Heart left ventricle (tissue), 16 donors: ENCODE measurements at regions of chr9 and their contacts with region 1.

Region 1: DNA sequence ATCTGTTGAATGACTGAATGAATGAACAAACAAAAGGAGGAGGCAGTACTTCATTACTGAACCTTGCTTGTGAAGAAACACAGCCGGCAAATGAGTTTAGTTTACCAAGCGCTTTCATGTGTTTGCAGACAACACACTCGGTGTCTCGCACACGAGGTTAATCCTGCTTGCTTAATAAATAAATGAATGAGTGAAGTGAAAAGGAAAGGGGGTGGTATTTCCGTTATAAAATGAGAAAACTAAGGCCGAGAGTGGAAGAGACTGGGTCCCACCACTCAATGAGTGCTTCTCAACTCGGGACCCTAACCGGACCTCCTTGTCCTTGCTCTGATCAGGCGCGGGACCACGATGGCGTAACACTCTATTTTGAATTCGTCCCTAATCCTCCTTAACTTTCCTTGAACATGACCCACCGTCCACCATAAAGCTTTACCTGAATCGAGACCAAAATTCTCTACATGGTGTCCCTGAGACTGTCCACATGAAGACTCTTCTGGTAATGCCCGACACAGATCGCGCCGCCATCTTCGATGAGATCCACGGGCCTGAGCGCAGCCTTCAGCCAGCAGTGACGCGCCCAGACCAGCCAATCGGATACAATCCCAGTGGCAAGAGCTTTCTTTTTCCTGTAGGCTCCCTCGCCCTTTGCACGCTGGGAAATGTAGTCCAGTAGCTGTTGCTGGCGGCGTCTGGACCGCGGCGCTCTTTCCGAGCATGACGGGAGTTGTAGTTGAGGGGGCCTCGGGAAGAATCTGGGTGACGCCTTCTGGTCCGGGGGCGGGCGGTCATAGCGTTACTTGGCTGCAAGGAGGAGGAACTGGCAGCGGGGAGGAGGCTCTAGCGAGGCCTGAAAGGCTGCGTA is at the starts of genes MRPL50 and ZNF189:
- DNase-seq: peak; percentile 97 to 99 (median 99)
- ATAC-seq: peak; percentile 96 to 99 (median 98)
- H3K4me3 ChIP-seq: peak within 1 kb of the TSS; percentile 37 to 86 (median 77)
- H3K27ac ChIP-seq: peak within 1 kb of the TSS; percentile 82 to 95 (median 91)
- H3K4me1 ChIP-seq: peaks cover 10 to 57% (median 34%) of the 10 kb centered on the region in 12 donors
- H3K27me3 ChIP-seq: no peaks in the 10 kb centered on the region
- CTCF ChIP-seq: no peak
- POLR2A ChIP-seq: peak in 1 of 2 donors; percentile 82
- total RNA-seq, gene MRPL50: 12.3 to 18.3 (median 15.6) TPM
- total RNA-seq, gene ZNF189: 16.9 to 34.6 (median 19.3) TPM

Region 2: DNA sequence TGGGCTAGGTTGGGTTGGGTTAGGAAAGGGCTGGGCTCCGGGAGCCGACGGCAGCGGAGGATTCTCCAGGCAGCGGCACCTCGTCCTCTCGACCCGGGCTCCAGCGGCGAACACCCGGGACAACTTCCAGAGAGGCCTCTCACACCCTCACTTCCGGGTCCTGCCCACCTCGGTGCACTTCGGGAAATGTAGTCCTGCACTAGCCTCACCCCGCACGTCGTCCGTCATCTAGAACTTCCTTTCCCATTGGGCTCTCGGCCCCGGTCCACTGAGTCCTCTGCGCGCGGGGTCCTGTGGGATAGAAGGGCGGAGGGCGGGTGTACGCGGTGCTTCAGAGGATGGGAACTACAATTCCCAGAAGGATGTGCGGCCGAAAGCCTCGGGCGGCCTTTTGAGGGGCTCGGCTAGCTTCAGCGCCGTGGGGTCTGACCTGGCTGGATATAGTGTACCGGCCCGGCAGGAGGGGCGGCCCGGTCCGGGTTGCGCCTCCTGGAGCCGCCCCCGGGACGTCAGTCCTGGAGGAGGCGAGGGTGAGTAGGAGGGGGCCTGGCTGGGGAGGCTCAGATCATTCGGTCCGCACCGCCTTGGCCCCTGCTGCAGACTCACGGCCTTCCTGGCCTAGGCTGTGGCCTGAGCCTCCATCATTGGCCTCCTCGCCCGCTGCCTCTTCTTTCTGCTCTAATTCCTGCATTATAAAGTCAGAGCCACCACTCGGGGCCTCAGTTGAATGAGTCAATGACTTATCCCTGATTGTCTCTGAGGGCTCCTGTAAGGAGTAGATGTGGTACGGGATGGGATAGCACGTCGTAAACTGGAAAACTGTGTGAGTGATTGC is 1299.2 kb before region 1 on chr9 and contains the starts of genes ERP44 and INVS:
- intact Hi-C with region 1: loop called in 1 of 10 experiments (anchors 10 kb)
- DNase-seq: peak; percentile 99 to 100 (median 99)
- ATAC-seq: peak; percentile 99
- H3K4me3 ChIP-seq: peak within 1 kb of the TSS; percentile 57 to 98 (median 87)
- H3K27ac ChIP-seq: peak within 1 kb of the TSS; percentile 56 to 96 (median 90)
- H3K4me1 ChIP-seq: peaks cover 0 to 42% (median 24%) of the 10 kb centered on the region in 12 donors
- H3K27me3 ChIP-seq: no peaks in the 10 kb centered on the region
- CTCF ChIP-seq: no peak
- POLR2A ChIP-seq: peak in 1 of 2 donors; percentile 86
- total RNA-seq, gene ERP44: 7.9 to 20.5 (median 15.7) TPM
- total RNA-seq, gene INVS: 4.9 to 10.4 (median 7.5) TPM

Region 3: DNA sequence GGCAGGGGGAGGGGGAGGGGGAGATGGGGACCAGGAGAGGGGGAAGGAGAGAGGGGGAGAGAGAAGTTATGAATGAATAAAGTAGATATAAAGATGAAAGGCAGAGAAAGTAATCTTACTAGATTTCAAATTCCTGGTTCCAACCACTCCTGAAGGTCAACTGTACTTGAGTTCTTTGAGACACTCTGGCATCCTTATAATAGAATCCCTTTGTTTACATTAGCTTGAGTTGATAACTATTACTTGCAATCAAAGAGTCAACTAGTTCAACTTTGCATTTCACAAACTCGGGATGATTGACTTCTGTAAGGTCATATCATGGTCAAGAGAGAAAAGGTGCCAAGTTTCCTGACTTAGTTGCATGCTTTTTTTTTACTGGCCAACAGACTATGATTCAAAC is 55.7 kb before region 1 on chr9:
- intact Hi-C with region 1: no loop called
- DNase-seq: no peak
- ATAC-seq: no peak
- H3K4me3 ChIP-seq: no peak overlapping the region
- H3K27ac ChIP-seq: no peak overlapping the region
- H3K4me1 ChIP-seq: no peaks in the 10 kb centered on the region
- H3K27me3 ChIP-seq: no peaks in the 10 kb centered on the region
- CTCF ChIP-seq: no peak
- POLR2A ChIP-seq: no peak

Region 4: GRCh38 chr9:101437806-101438232 is 39.5 kb after region 1 on chr9:
- intact Hi-C with region 1: loop called in 2 of 10 experiments (anchors 5 to 10 kb)
- DNase-seq: peak; percentile 56 to 89 (median 70)
- ATAC-seq: peak; percentile 92 to 96 (median 94)
- H3K4me3 ChIP-seq: no peak overlapping the region
- H3K27ac ChIP-seq: peak overlapping the region in 10 of 12 donors; percentile 4 to 62 (median 52)
- H3K4me1 ChIP-seq: peaks cover 0 to 8% (median 0%) of the 10 kb centered on the region in 12 donors
- H3K27me3 ChIP-seq: no peaks in the 10 kb centered on the region
- CTCF ChIP-seq: no peak
- POLR2A ChIP-seq: no peak

Region 5: DNA sequence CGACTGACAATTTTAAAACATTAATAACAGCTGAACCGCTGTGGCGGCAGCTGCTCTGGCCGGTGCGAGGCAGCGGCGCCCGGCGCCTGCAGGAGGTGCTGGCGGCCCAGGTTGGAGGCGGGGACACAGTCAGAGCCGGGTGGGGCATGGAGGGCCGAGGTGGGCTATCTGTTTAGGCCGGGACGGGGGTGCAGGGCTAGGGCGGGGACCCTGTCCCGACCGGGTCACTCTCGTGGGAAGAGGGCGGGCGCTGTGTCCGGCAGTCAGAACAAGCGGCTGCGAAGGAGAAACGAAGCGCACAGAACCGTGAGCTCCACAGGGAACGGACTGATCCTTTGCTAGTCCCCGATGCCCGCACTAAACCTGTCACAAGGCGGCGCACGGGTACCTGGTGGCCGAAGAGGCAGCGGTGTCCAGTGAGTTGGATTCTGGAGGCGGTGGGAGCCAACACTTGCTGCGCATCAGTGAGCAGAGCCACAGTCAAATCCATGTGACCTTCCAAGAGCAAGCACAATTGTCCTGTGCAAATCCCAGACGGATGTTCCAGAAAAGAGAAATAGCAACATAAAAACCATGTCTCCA is 50.9 kb after region 1 on chr9:
- intact Hi-C with region 1: loop called in 5 of 10 experiments (anchors 2 to 10 kb)
- DNase-seq: peak; percentile 66 to 86 (median 77)
- ATAC-seq: peak; percentile 87 to 97 (median 97)
- H3K4me3 ChIP-seq: peak overlapping the region; percentile 37 to 78 (median 60)
- H3K27ac ChIP-seq: peak overlapping the region in 11 of 12 donors; percentile 2 to 89 (median 78)
- H3K4me1 ChIP-seq: peaks cover 0 to 11% (median 0%) of the 10 kb centered on the region in 12 donors
- H3K27me3 ChIP-seq: peaks cover 0 to 16% (median 0%) of the 10 kb centered on the region in 9 donors
- CTCF ChIP-seq: peak; percentile 39 to 81 (median 63)
- POLR2A ChIP-seq: no peak

Region 6: GRCh38 chr9:101530077-101530711 is 131.9 kb after region 1 on chr9:
- intact Hi-C with region 1: loop called in 6 of 10 experiments (anchors 2 to 5 kb)
- DNase-seq: peak in 4 of 5 donors; percentile 35 to 64 (median 53)
- ATAC-seq: peak in 3 of 4 donors; percentile 33 to 55 (median 36)
- H3K4me3 ChIP-seq: no peak overlapping the region
- H3K27ac ChIP-seq: no peak overlapping the region
- H3K4me1 ChIP-seq: peaks cover 0 to 21% (median 9%) of the 10 kb centered on the region in 12 donors
- H3K27me3 ChIP-seq: no peaks in the 10 kb centered on the region
- CTCF ChIP-seq: peak; percentile 77 to 93 (median 87)
- POLR2A ChIP-seq: no peak

Region 7: GRCh38 chr9:101536938-101537337 is 138.6 kb after region 1 on chr9:
- intact Hi-C with region 1: loop called in 6 of 10 experiments (anchors 2 to 5 kb)
- DNase-seq: no peak
- ATAC-seq: no peak
- H3K4me3 ChIP-seq: no peak overlapping the region
- H3K27ac ChIP-seq: no peak overlapping the region
- H3K4me1 ChIP-seq: peaks cover 0 to 37% (median 25%) of the 10 kb centered on the region in 12 donors
- H3K27me3 ChIP-seq: no peaks in the 10 kb centered on the region
- CTCF ChIP-seq: no peak
- POLR2A ChIP-seq: no peak

Region 8: DNA sequence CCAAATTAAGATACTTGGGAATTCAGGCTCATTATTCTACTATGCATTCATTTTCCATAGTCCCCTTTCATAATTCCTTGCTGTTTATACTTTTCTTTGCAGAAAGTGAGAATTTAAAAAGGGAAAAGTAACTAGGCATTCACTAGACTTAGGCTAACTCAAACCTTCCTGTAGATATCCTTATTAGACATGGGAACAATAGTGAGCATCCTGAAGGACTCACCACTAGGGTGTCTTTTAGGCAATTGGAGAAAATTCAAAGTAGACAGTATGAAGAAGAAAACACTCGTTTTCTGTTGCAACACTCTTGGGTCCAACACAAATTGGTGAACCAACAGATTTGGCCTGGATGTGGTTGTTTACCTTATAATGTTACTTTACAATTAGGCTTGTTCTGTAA is 553.3 kb after region 1 on chr9:
- intact Hi-C with region 1: no loop called
- DNase-seq: no peak
- ATAC-seq: no peak
- H3K4me3 ChIP-seq: no peak overlapping the region
- H3K27ac ChIP-seq: no peak overlapping the region
- H3K4me1 ChIP-seq: no peaks in the 10 kb centered on the region
- H3K27me3 ChIP-seq: no peaks in the 10 kb centered on the region
- CTCF ChIP-seq: no peak
- POLR2A ChIP-seq: no peak